Mammary epithelial cell (primary cell): ENCODE measurements at regions of chr14 and their contacts with region 1.

Region 1: DNA sequence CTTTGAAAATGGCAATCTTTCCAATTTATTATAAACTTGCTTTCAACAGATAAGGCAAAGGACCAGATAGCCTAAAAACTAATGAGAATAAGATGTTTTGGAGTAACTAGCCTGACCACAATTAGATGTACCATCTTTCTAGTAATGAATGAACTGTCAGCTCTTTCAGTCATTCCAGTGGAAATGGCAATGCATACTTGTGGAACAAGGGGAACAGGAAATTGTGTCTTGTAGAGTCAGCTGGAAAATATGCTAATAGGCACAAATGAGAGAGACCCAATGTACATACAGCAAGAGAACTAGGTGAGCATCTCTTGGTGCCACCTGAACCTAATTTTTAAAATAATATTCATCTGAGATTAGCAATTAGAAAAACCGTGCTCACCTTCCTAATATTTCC is 76.1 kb upstream of the GPHB5 start:
- DNase-seq: peak; percentile 3
- H3K4me3 ChIP-seq: no peak overlapping the region
- H3K27ac ChIP-seq: no peak overlapping the region
- H3K4me1 ChIP-seq: peaks cover 10% of the 10 kb centered on the region
- H3K27me3 ChIP-seq: no peaks in the 10 kb centered on the region
- CTCF ChIP-seq: no peak

Region 2: DNA sequence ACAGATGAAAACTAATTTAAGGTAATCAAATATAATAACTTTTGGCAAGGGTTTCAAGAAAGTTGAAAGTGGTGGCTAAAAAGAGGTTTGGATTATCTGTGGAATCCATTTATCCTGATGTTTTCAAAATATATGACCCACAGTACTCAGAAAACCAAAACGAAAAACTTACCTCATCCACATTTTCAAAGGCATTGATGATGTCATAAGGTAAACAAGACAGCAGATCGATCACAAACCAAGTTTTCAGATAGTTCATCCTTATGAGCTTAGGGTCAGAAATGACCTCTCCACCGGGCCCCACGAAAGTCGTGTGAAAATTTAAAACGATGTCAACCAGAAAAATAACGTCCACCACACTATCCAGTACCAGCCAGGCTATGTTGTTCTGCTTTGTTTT is 414.1 kb before region 1 on chr14:
- CTCF ChIA-PET with region 1: interaction called, 10 read pairs
- dilution Hi-C with region 1: no loop called
- in situ Hi-C with region 1: no loop called
- intact Hi-C with region 1: no loop called
- DNase-seq: no peak
- H3K4me3 ChIP-seq: no peak overlapping the region
- H3K27ac ChIP-seq: no peak overlapping the region
- H3K4me1 ChIP-seq: no peaks in the 10 kb centered on the region
- H3K27me3 ChIP-seq: no peaks in the 10 kb centered on the region
- CTCF ChIP-seq: no peak